MCF 10A (cell line): ENCODE measurements at regions of chr5 and their contacts with region 1.

Region 1: GRCh38 chr5:126676195-126676624 is 75.5 kb downstream of the PHAX start:
- DNase-seq: peak; percentile 90
- H3K4me3 Mint-ChIP-seq: no peak overlapping the region
- H3K27ac Mint-ChIP-seq: no peak overlapping the region
- H3K4me1 Mint-ChIP-seq: peaks cover 22% of the 10 kb centered on the region
- H3K27me3 Mint-ChIP-seq: no peaks in the 10 kb centered on the region
- CTCF ChIP-seq: peak; percentile 95

Region 2: DNA sequence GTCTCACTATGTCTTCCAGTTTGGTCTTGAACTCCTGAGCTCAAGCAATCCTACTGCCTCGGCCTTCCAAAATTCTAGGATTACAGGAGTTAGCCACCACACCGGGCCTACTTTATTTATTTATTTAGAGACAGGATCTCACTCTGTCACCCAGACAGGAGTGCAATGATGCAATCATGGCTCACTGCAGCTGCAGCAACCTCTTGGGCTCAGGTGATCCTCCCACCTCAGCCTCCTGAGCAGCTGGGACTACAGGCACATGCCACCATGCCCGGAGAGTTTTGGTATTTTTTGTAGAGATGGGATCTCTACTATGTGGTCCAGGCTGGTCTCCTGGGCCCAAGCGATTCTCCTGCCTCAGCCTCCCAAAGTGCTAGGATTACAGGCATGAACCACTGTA is 42.7 kb before region 1 on chr5:
- CTCF ChIA-PET with region 1: no interaction called
- POLR2A ChIA-PET with region 1: no interaction called
- intact Hi-C with region 1: no loop called
- DNase-seq: no peak
- H3K4me3 Mint-ChIP-seq: no peak overlapping the region
- H3K27ac Mint-ChIP-seq: no peak overlapping the region
- H3K4me1 Mint-ChIP-seq: no peaks in the 10 kb centered on the region
- H3K27me3 Mint-ChIP-seq: peaks cover 12% of the 10 kb centered on the region
- CTCF ChIP-seq: no peak

Region 3: GRCh38 chr5:126651013-126651577 is 25.1 kb before region 1 on chr5:
- CTCF ChIA-PET with region 1: interaction called, 80 read pairs
- POLR2A ChIA-PET with region 1: no interaction called
- intact Hi-C with region 1: no loop called
- DNase-seq: no peak
- H3K4me3 Mint-ChIP-seq: no peak overlapping the region
- H3K27ac Mint-ChIP-seq: no peak overlapping the region
- H3K4me1 Mint-ChIP-seq: no peaks in the 10 kb centered on the region
- H3K27me3 Mint-ChIP-seq: no peaks in the 10 kb centered on the region
- CTCF ChIP-seq: no peak

Region 4: DNA sequence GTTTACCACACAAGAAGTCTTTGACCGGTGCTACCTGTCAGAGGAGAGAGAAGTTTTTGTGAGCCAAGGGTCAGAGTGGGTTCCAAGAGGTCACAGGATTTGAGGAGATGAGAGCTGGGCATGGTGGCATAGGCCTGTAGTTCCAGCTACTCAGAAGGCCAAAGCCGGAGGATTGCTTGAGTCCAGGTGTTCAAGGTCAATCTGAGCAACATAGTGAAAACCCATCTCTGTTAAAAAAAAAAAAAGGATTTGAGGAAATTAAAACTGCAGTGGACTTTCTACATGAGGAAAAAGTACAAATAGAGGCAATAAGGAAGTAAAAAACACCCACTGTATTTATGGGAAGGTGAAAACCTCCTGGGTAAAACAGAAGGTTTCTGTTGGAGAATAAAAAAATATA is 11.6 kb before region 1 on chr5:
- CTCF ChIA-PET with region 1: interaction called, 80 read pairs
- POLR2A ChIA-PET with region 1: no interaction called
- intact Hi-C with region 1: no loop called
- DNase-seq: no peak
- H3K4me3 Mint-ChIP-seq: no peak overlapping the region
- H3K27ac Mint-ChIP-seq: no peak overlapping the region
- H3K4me1 Mint-ChIP-seq: no peaks in the 10 kb centered on the region
- H3K27me3 Mint-ChIP-seq: no peaks in the 10 kb centered on the region
- CTCF ChIP-seq: no peak

Region 5: GRCh38 chr5:126693806-126694802 is 17.9 kb after region 1 on chr5:
- CTCF ChIA-PET with region 1: interaction called, 12 read pairs
- POLR2A ChIA-PET with region 1: no interaction called
- intact Hi-C with region 1: no loop called
- DNase-seq: no peak
- H3K4me3 Mint-ChIP-seq: no peak overlapping the region
- H3K27ac Mint-ChIP-seq: no peak overlapping the region
- H3K4me1 Mint-ChIP-seq: no peaks in the 10 kb centered on the region
- H3K27me3 Mint-ChIP-seq: no peaks in the 10 kb centered on the region
- CTCF ChIP-seq: no peak

Region 6: GRCh38 chr5:126794157-126794828 is 118.1 kb after region 1 on chr5:
- CTCF ChIA-PET with region 1: interaction called, 158 read pairs
- POLR2A ChIA-PET with region 1: interaction called, 3 read pairs
- intact Hi-C with region 1: no loop called
- DNase-seq: no peak
- H3K4me3 Mint-ChIP-seq: no peak overlapping the region
- H3K27ac Mint-ChIP-seq: peak overlapping the region; percentile 68
- H3K4me1 Mint-ChIP-seq: peaks cover 18% of the 10 kb centered on the region
- H3K27me3 Mint-ChIP-seq: no peaks in the 10 kb centered on the region
- CTCF ChIP-seq: no peak

Region 7: GRCh38 chr5:126808521-126808988 is 132.3 kb after region 1 on chr5:
- CTCF ChIA-PET with region 1: interaction called, 158 read pairs
- POLR2A ChIA-PET with region 1: interaction called, 3 read pairs
- intact Hi-C with region 1: no loop called
- DNase-seq: peak; percentile 61
- H3K4me3 Mint-ChIP-seq: no peak overlapping the region
- H3K27ac Mint-ChIP-seq: peak overlapping the region; percentile 61
- H3K4me1 Mint-ChIP-seq: peaks cover 17% of the 10 kb centered on the region
- H3K27me3 Mint-ChIP-seq: no peaks in the 10 kb centered on the region
- CTCF ChIP-seq: peak; percentile 47

Region 8: DNA sequence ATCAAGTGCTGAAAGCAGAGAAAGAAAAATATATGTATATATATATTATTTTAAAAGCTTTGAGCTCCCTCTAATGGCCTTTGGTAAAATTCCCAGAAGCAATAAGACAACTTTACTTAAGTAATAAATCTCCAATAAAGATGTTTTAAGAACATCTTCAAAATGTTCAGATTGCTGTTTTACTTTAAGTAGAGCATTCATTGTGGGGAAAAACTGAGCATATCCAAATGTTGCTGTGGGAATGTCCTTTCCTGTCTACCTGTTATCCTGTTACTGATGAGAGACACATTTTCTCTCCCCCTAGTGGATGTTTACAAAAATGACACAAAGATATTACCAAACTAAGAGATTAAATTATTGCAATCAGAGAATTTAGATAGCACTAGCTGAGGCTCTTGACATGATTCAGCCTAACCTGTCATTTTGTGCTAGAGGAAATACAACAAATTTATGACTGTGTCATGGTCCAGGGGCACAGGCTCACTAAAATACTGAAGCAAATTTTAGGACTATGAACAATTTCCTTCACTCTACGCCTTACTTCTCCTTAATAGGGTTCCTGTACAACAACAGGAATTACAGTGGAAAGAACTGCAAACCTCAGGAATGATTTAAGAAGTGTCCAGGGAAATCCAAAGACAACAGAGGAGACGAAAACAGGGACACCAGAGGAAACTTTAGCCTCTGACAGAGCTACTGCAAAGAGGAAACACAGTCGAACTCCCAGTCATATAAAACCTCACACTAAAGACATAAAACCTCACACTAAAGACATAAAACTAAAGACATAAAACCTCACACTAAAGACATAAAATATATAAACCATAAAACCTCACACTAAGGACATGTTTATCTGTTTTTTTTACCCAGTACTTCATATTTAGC is 816.9 kb after region 1 on chr5:
- CTCF ChIA-PET with region 1: interaction called, 19 read pairs
- POLR2A ChIA-PET with region 1: no interaction called
- intact Hi-C with region 1: no loop called
- DNase-seq: peak; percentile 75
- H3K4me3 Mint-ChIP-seq: no peak overlapping the region
- H3K27ac Mint-ChIP-seq: no peak overlapping the region
- H3K4me1 Mint-ChIP-seq: no peaks in the 10 kb centered on the region
- H3K27me3 Mint-ChIP-seq: peaks cover 82% of the 10 kb centered on the region
- CTCF ChIP-seq: peak; percentile 95